GM12878 (cell line): ENCODE measurements at regions of chr15 and their contacts with region 1.

Region 1: DNA sequence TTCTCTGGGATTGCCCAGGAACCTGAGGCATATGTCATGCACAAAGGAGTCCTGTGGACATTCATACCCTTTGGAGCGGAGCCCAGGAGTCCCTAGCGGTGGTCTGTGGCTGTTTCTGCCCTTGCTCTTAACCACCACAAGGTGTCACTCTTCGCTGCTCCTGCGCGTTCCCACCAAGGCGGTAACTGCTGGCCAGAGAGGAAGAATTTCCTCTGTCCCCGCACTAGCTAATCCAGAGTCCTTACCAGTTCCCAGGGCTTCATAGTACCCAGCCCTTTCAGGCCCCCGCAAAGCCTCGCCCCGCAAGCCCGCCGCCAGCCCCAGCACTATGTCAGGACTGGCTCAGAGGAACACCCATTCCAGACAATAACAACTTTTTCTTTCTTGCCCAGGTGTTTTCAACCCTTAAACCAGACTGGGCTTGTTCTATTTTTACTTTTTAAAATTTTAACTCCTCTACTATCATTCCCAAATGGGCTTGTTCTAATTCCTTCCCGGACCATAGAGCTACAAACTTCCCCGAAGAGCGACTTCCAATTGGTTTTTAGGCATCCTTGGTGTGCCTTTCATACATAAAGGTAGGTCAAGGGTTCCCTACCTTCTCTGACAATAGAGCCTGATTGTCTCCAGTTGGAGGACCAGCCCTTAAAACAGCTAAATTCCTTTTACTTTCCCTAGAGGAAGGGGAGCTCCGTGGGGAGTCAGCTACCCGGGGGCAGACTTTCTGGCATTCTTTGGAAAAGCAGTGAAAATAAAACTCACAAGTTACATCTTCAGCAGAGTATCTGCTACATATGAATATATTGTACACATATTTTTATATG is 31.8 kb upstream of the ZNF774 start:
- DNase-seq: peak; percentile 45
- ATAC-seq: peak; percentile 100
- H3K4me3 ChIP-seq: no peak overlapping the region
- H3K27ac ChIP-seq: no peak overlapping the region
- H3K4me1 ChIP-seq: no peaks in the 10 kb centered on the region
- H3K27me3 ChIP-seq: no peaks in the 10 kb centered on the region
- CTCF ChIP-seq: peak; percentile 98 to 99 (median 98); a peak in 5 of 6 replicates
- EP300 ChIP-seq: no peak
- POLR2A ChIP-seq: no peak
- RAD21 ChIP-seq: peak; percentile 93

Region 2: DNA sequence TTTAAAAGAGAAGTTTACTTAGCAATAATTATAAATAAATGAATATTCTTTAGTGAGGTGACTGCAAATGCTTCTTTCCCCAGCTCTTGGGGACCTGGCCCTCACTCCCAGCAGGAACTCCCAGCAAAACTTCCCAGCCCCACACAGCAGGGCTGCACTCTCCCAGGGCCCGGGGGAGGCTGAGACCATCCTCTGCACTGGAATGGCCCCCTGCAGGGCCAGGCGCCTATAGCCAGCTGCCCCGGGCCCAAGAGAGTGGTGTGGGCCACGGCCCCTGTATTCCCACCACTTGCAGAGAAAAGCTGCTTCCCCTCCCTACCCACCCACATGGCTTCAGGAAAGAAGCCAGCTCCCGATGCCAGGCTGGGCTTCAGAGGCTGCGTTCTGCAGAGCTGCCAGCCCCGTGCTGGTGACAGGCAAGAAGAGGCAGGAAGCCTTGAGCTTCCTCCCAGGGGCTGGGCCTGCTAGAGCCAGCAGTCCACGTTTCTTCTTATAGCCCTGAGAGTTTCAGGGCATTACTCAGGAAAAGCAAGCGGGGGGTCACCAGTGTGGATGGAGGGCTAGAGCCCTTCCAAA is 238.0 kb before region 1 on chr15:
- CTCF ChIA-PET with region 1: no interaction called
- POLR2A ChIA-PET with region 1: no interaction called
- RAD21 ChIA-PET with region 1: no interaction called
- SMC1A ChIA-PET with region 1: no interaction called
- in situ Hi-C with region 1: no loop called
- intact Hi-C with region 1: no loop called
- DNase-seq: no peak
- ATAC-seq: no peak
- H3K4me3 ChIP-seq: no peak overlapping the region
- H3K27ac ChIP-seq: no peak overlapping the region
- H3K4me1 ChIP-seq: no peaks in the 10 kb centered on the region
- H3K27me3 ChIP-seq: no peaks in the 10 kb centered on the region
- CTCF ChIP-seq: no peak
- EP300 ChIP-seq: no peak
- POLR2A ChIP-seq: 0 out of 2 replicates have a peak, but pooled peaks have one; percentile 8
- RAD21 ChIP-seq: no peak

Region 3: GRCh38 chr15:90300988-90301706 is 19.1 kb before region 1 on chr15:
- CTCF ChIA-PET with region 1: interaction called, 142 read pairs
- POLR2A ChIA-PET with region 1: interaction called, 4 read pairs
- RAD21 ChIA-PET with region 1: interaction called, 23 read pairs
- SMC1A ChIA-PET with region 1: interaction called, 90 read pairs
- in situ Hi-C with region 1: no loop called
- intact Hi-C with region 1: no loop called
- DNase-seq: no peak
- ATAC-seq: peak; percentile 86
- H3K4me3 ChIP-seq: no peak overlapping the region
- H3K27ac ChIP-seq: no peak overlapping the region
- H3K4me1 ChIP-seq: peaks cover 14% of the 10 kb centered on the region; the same call in 1 of the 2 replicates
- H3K27me3 ChIP-seq: no peaks in the 10 kb centered on the region
- CTCF ChIP-seq: peak; percentile 63 to 92 (median 90)
- EP300 ChIP-seq: no peak
- POLR2A ChIP-seq: no peak
- RAD21 ChIP-seq: peak; percentile 24; the same call in 1 of the 2 replicates

Region 4: DNA sequence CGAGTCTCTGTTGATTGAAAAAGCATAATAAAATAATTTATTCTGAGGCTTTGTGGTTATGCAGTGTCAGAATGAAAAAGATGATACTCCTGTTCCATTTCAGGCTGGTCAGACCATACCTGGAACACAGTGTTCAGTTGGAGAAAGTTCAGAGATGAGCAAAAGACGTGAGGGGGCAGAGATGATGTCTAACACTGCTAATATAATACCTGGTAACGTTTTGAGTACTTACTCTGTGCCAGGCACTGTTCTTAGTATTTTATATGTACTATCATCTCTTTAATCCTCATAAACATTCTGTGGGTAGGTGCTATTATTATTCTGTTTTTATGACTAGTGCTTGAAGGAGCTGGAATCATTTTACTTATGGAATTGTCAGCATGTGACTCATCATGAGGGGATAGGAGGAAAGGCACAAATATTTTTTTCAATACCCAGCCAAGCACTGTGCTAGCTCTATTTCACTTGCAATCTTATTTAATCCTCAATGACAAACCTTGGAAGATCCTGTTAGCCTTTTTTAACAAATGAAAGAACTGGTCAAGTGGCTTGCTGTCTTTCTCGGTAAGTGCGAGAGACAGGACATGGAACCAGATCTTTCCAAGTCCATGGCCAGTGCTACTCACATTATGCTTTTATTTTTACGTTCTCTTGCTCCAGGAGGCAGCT is 99.6 kb after region 1 on chr15:
- CTCF ChIA-PET with region 1: interaction called, 3 read pairs
- POLR2A ChIA-PET with region 1: no interaction called
- RAD21 ChIA-PET with region 1: interaction called, 3 read pairs
- SMC1A ChIA-PET with region 1: no interaction called
- in situ Hi-C with region 1: no loop called
- intact Hi-C with region 1: loop called (anchors 5 kb)
- DNase-seq: peak; percentile 19
- ATAC-seq: peak; percentile 91
- H3K4me3 ChIP-seq: no peak overlapping the region
- H3K27ac ChIP-seq: peak overlapping the region; percentile 73
- H3K4me1 ChIP-seq: peaks cover 30% of the 10 kb centered on the region
- H3K27me3 ChIP-seq: no peaks in the 10 kb centered on the region
- CTCF ChIP-seq: no peak
- EP300 ChIP-seq: no peak
- POLR2A ChIP-seq: no peak
- RAD21 ChIP-seq: no peak

Region 5: GRCh38 chr15:90482124-90483011 is 162.1 kb after region 1 on chr15:
- CTCF ChIA-PET with region 1: interaction called, 98 read pairs
- POLR2A ChIA-PET with region 1: no interaction called
- RAD21 ChIA-PET with region 1: interaction called, 59 read pairs
- SMC1A ChIA-PET with region 1: interaction called, 107 read pairs
- in situ Hi-C with region 1: no loop called
- intact Hi-C with region 1: loop called (anchors 1 kb)
- DNase-seq: no peak
- ATAC-seq: peak; percentile 69
- H3K4me3 ChIP-seq: no peak overlapping the region
- H3K27ac ChIP-seq: no peak overlapping the region
- H3K4me1 ChIP-seq: no peaks in the 10 kb centered on the region
- H3K27me3 ChIP-seq: no peaks in the 10 kb centered on the region
- CTCF ChIP-seq: peak; percentile 52 to 66 (median 53); a peak in 4 of 6 replicates
- EP300 ChIP-seq: no peak
- POLR2A ChIP-seq: no peak
- RAD21 ChIP-seq: peak; percentile 82

Region 6: DNA sequence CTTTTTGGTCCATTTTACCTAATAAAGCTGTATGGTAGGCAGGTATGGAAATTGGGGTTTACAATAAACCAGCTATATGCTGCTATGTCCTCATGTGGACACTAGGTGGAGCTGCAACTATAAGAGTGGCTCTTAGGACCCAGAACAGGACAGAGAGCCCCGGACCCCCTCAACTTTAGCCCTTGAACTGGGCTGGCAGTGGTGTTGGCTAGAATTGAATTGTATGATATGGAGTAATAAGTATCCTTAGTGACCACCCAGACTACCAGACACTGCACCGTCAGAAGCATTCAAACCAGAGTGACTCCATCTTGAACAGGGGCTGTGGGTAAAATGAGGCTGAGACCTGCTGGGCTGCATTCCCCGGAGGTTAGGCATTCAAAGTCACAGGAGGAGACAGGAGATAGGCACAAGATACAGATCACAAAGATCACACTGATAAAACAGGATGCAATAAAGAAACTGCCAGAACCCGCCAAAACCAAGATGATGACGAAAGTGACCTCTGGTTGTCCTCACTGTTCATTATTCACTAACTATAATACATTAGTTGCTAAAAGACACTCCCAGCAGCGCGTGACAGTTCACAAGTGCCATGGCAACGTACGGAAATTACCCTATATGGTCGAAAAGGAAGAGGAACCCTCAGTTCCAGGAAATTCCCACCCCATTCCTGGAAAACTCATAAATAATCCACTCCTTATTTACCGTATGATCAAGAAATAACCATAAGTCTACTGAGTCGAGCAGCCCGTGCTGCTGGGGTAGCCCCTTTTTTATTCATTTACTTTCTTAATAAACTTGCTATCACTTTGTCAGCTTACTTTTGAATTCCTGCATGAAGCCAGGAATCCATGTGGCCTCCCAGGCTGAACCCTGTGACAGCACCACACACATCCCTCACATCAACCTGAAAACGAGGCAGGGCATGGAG is 328.1 kb after region 1 on chr15:
- CTCF ChIA-PET with region 1: interaction called, 12 read pairs
- POLR2A ChIA-PET with region 1: no interaction called
- RAD21 ChIA-PET with region 1: interaction called, 15 read pairs
- SMC1A ChIA-PET with region 1: interaction called, 7 read pairs
- in situ Hi-C with region 1: no loop called
- intact Hi-C with region 1: no loop called
- DNase-seq: no peak
- ATAC-seq: peak; percentile 84
- H3K4me3 ChIP-seq: no peak overlapping the region
- H3K27ac ChIP-seq: peak overlapping the region; percentile 89
- H3K4me1 ChIP-seq: peaks cover 14% of the 10 kb centered on the region
- H3K27me3 ChIP-seq: no peaks in the 10 kb centered on the region
- CTCF ChIP-seq: peak; percentile 79 to 88 (median 84)
- EP300 ChIP-seq: 0 out of 4 replicates have a peak, but pooled peaks of 1 of the 2 experiments have one; percentile 20
- POLR2A ChIP-seq: no peak
- RAD21 ChIP-seq: peak; percentile 98

Region 7: DNA sequence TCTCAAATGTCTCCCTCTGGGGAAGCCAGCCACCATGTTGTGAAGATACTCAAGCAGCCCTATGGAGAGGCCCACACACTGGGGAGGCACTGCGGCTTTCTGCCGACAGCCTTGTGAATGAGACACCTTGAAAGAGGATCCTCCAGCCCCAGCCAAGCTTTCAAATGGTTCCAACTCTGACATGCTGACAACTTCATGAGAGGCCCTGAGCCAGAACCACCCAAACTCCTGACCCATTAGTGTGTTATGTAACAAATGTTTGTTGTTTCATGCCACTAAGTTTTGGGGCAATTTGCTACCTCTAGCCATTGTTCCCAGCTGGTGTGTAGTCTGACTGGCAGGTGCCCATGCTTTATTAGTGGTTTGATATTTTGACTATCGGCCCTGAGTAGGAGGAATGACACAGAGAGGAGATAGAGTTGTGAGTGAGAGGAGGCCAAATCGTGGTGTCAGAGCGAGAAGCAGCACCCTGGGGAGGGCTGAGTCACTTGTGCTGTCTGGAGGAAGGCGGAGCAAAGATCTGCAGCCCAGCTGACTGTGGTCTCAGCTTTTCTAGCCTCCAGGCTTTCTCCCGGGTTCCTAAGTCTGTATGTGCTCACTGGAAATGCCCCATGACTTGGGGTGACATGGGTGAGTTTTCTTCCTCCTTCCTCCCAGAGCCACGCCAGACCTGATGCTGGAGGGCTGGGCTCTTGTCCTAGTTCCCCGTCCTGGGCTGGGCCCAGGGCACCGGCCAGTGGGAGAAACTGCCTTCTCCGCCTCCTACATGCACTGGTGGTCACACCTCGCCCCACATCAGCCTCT is 340.1 kb after region 1 on chr15:
- CTCF ChIA-PET with region 1: no interaction called
- POLR2A ChIA-PET with region 1: no interaction called
- RAD21 ChIA-PET with region 1: no interaction called
- SMC1A ChIA-PET with region 1: no interaction called
- in situ Hi-C with region 1: no loop called
- intact Hi-C with region 1: no loop called
- DNase-seq: peak; percentile 86
- ATAC-seq: peak; percentile 72
- H3K4me3 ChIP-seq: peak overlapping the region; percentile 58
- H3K27ac ChIP-seq: peak overlapping the region; percentile 100
- H3K4me1 ChIP-seq: peaks cover 73% of the 10 kb centered on the region
- H3K27me3 ChIP-seq: no peaks in the 10 kb centered on the region
- CTCF ChIP-seq: no peak
- EP300 ChIP-seq: 0 out of 4 replicates have a peak, but pooled peaks of 1 of the 2 experiments have one; percentile 29
- POLR2A ChIP-seq: peak; percentile 77
- RAD21 ChIP-seq: no peak